Right ventricle myocardium inferior (tissue), 1 donor: ENCODE measurements at regions of chr2 and their contacts with region 1.

Region 1: GRCh38 chr2:181970160-181970794 is 15.4 kb upstream of the PPP1R1C start:
- DNase-seq: no peak
- ATAC-seq: no peak

Region 2: GRCh38 chr2:182077451-182078142 is 107.3 kb after region 1 on chr2:
- intact Hi-C with region 1: loop called (anchors 5 kb)
- DNase-seq: peak; percentile 66
- ATAC-seq: peak; percentile 96